ENCODE measurements at regions of chr6 and their contacts with region 1.

Region 1: DNA sequence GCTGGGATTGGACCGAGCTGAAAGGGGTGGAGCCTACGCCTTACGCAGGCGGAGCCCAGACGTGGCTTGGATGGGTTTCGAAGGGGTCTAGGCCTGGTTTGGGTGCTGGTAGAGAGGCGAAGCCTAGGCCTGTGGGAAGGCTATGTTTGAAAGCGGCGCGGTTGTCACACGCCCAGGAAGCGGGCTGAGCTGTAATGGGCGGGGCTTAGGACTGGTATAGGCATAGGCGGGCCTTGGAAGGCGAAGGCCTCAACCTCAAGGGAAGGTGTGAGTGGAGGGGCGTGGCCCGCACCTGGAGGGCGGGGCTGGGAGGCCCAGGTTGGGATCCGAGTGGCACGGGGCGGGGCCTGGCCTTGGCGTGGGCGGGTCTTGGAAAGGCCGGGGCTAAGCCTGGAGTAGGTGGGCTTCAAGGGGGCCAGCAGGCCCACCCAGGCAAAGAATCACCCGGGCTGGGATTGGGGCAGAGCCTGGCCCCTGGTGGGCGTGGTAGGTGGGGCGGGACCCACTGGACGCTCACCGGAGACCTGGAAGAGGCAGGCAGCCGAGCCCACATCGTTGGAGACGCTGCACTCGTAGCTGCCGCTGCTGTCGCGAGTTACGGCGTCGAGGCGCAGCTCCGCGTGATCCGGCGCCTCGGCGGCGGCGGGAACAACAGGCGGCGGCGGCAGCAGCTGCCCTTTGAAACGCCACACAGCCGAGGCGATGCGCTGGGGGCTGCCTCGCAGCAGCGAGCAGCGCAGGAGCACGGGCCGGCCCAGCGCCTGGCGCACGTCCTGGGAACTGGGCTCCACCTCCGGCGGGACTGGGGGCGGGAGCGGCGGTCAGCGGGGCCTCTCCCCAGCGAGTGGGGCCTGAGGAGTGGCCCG is 49.0 kb downstream of the MDGA1 start:
- DNase-seq: peak; percentile 99
- ATAC-seq: peak; percentile 89
- H3K4me3 Mint-ChIP-seq: peak overlapping the region; percentile 58
- H3K27ac Mint-ChIP-seq: no peak overlapping the region
- H3K4me1 Mint-ChIP-seq: peaks cover 18% of the 10 kb centered on the region
- H3K27me3 Mint-ChIP-seq: peaks cover 72% of the 10 kb centered on the region
- CTCF ChIP-seq: no peak

Region 2: GRCh38 chr6:37576336-37576813 is 72.3 kb before region 1 on chr6:
- CTCF ChIA-PET with region 1: interaction called, 11 read pairs
- POLR2A ChIA-PET with region 1: no interaction called
- DNase-seq: no peak
- ATAC-seq: no peak
- H3K4me3 Mint-ChIP-seq: no peak overlapping the region
- H3K27ac Mint-ChIP-seq: no peak overlapping the region
- H3K4me1 Mint-ChIP-seq: peaks cover 8% of the 10 kb centered on the region
- H3K27me3 Mint-ChIP-seq: peaks cover 2% of the 10 kb centered on the region; the same call in 1 of the 2 replicates
- CTCF ChIP-seq: no peak

Region 3: DNA sequence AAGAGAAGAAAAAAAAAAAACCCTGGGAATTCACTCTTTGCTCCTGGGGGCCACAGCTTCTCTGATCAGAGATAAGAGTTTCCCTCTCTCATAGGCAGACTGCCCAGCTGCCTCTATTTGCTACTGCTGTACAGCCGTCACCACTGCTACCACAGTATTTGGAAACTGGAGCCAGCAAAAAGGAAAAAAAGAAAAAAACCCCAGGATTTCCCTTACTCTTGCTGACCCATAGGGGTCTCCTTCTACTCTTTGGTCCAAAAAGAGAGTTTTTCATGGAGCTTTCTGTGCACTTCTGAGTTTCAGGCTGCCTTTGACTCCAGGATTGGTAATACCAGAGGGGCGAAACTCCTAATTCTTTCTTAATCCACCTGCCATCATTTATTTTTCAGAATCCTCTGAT is 40.8 kb before region 1 on chr6:
- CTCF ChIA-PET with region 1: interaction called, 40 read pairs
- POLR2A ChIA-PET with region 1: no interaction called
- DNase-seq: no peak
- ATAC-seq: peak; percentile 72
- H3K4me3 Mint-ChIP-seq: no peak overlapping the region
- H3K27ac Mint-ChIP-seq: no peak overlapping the region
- H3K4me1 Mint-ChIP-seq: no peaks in the 10 kb centered on the region
- H3K27me3 Mint-ChIP-seq: peaks cover 3% of the 10 kb centered on the region; the same call in 1 of the 2 replicates
- CTCF ChIP-seq: peak; percentile 11; the same call in 1 of the 2 replicates

Region 4: DNA sequence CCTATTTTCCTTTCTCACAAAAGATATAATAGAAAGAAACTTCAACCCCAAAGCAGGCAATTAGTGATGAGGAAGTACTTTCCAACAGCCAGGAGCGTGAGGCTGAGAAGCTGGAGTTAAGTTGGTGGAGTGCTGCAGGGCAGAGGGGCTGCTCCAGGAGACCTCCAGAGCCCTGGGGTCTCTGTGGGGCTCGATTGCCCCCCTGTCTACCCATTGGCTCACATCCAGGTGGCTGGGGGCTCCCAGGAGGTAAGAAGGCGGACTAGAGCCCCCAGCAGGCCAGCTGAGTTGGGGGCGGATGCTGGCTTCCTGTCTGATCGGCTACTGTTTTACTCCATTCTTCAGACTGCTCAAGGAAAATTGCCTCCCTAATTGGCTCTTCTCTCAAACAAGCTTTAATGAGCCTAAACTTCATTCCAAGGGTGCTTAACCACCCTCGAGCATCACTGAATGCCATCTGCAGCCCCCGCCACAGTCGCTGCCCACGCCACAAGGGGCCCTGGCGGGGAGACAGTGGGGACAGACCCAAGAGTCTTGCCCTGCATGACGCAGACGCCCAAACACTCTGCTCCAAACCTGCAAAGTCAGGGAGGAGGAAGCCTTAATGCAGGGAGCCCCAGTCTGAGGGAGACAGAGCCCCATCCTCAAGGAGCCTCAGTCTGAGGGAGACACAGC is 29.6 kb before region 1 on chr6:
- CTCF ChIA-PET with region 1: interaction called, 11 read pairs
- POLR2A ChIA-PET with region 1: no interaction called
- DNase-seq: no peak
- ATAC-seq: peak; percentile 34; the same call in 1 of the 2 replicates
- H3K4me3 Mint-ChIP-seq: no peak overlapping the region
- H3K27ac Mint-ChIP-seq: no peak overlapping the region
- H3K4me1 Mint-ChIP-seq: peaks cover 7% of the 10 kb centered on the region; the same call in 1 of the 2 replicates
- H3K27me3 Mint-ChIP-seq: peaks cover 3% of the 10 kb centered on the region
- CTCF ChIP-seq: no peak

Region 5: GRCh38 chr6:37663019-37663810 is 14.5 kb after region 1 on chr6:
- CTCF ChIA-PET with region 1: interaction called, 25 read pairs
- POLR2A ChIA-PET with region 1: no interaction called
- DNase-seq: no peak
- ATAC-seq: no peak
- H3K4me3 Mint-ChIP-seq: no peak overlapping the region
- H3K27ac Mint-ChIP-seq: no peak overlapping the region
- H3K4me1 Mint-ChIP-seq: peaks cover 12% of the 10 kb centered on the region
- H3K27me3 Mint-ChIP-seq: peaks cover 15% of the 10 kb centered on the region
- CTCF ChIP-seq: no peak

Region 6: GRCh38 chr6:37705239-37706051 is 56.7 kb after region 1 on chr6:
- CTCF ChIA-PET with region 1: interaction called, 22 read pairs
- POLR2A ChIA-PET with region 1: no interaction called
- DNase-seq: peak; percentile 87
- ATAC-seq: peak; percentile 77
- H3K4me3 Mint-ChIP-seq: peak overlapping the region; percentile 72
- H3K27ac Mint-ChIP-seq: peak overlapping the region; percentile 97
- H3K4me1 Mint-ChIP-seq: peaks cover 16% of the 10 kb centered on the region
- H3K27me3 Mint-ChIP-seq: peaks cover 52% of the 10 kb centered on the region
- CTCF ChIP-seq: peak; percentile 76